ENCODE measurements at regions of chr12 and their contacts with region 1.

Region 1: DNA sequence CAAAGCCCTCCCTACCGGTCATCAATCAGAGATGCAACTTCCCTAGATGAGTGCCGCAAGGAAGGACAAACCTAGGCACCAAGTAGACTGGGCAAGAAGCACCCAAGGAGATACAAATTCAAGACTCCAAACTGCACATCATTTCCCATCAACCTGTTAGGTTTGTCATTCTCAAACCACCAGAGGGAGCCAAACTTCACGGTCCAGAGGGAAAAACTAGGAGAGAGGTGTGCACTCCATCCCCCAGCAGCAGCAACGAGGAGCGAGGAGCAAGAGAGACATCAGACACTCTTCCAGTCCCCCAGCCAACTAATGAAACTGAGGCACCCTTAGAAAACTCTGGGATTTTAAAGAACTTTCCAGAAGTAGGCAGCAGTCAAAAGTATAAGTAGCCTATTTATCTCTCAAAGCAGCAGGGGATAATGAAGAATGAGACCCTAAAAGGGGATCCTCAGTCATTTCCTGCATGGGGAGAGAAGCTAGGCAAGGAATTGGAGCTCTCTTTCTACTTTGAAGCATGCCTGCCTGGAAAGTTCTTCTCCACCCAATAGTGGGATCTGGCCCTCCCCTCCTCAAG is 37.0 kb upstream of the NT5DC3 start:
- DNase-seq: peak; percentile 48 to 52
- H3K4me3 ChIP-seq: no peak overlapping the region
- H3K27ac ChIP-seq: no peak overlapping the region
- H3K4me1 ChIP-seq: peaks cover 6% of the 10 kb centered on the region; the same call in 1 of the 2 replicates
- H3K27me3 ChIP-seq: no peaks in the 10 kb centered on the region
- CTCF ChIP-seq: peak; percentile 85

Region 2: DNA sequence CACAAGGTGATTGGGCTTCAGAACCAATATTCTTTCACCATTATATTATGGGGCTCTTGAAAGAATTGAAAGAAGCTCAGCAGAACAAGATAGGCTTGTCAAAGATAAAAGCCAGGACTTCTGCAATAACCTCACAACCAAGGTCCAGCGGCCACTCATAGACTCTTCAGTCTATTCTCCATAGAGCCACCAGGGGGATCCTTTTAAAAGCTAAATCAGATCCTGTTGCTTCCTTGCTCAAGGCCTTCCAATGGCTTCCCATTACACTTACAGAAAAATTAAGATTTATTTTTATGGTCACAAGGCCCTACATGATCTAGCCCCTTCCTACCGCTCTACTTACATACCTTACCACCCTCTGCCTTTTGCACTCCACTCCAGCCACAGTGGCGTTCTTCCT is 551.8 kb before region 1 on chr12:
- CTCF ChIA-PET with region 1: no interaction called
- POLR2A ChIA-PET with region 1: no interaction called
- intact Hi-C with region 1: no loop called
- DNase-seq: no peak
- H3K4me3 ChIP-seq: no peak overlapping the region
- H3K27ac ChIP-seq: no peak overlapping the region
- H3K4me1 ChIP-seq: no peaks in the 10 kb centered on the region
- H3K27me3 ChIP-seq: peaks cover 9% of the 10 kb centered on the region; the same call in 1 of the 2 replicates
- CTCF ChIP-seq: peak; percentile 57

Region 3: GRCh38 chr12:105100998-105101397 is 1223.0 kb after region 1 on chr12:
- CTCF ChIA-PET with region 1: no interaction called
- POLR2A ChIA-PET with region 1: no interaction called
- intact Hi-C with region 1: loop called (anchors 1 kb)
- DNase-seq: no peak
- H3K4me3 ChIP-seq: no peak overlapping the region
- H3K27ac ChIP-seq: no peak overlapping the region
- H3K4me1 ChIP-seq: peaks cover 16% of the 10 kb centered on the region
- H3K27me3 ChIP-seq: no peaks in the 10 kb centered on the region
- CTCF ChIP-seq: peak; percentile 27; the same call in 1 of the 2 replicates

Measured in PC-9 (cell line).